Activated CD4-positive, alpha-beta T cell treated with anti-CD3 and anti-CD28 coated beads, Interleukin-2, amount 10 ng/mL, durations not matched to agents 24 days and 14 days (primary cell): ENCODE measurements at regions of chr11 and their contacts with region 1.

Region 1: GRCh38 chr11:86138958-86139357 is 70.1 kb upstream of the PICALM start:
- DNase-seq: peak; percentile 79
- H3K4me3 Mint-ChIP-seq: peak overlapping the region; percentile 72
- H3K27ac Mint-ChIP-seq: peak overlapping the region; percentile 85
- H3K4me1 Mint-ChIP-seq: peaks cover 58% of the 10 kb centered on the region
- H3K27me3 Mint-ChIP-seq: no peaks in the 10 kb centered on the region

Region 2: GRCh38 chr11:86116386-86116726 is 22.6 kb before region 1 on chr11:
- intact Hi-C with region 1: loop called (anchors 1 kb)
- DNase-seq: peak; percentile 70
- H3K4me3 Mint-ChIP-seq: peak overlapping the region; percentile 24
- H3K27ac Mint-ChIP-seq: peak overlapping the region; percentile 69
- H3K4me1 Mint-ChIP-seq: peaks cover 30% of the 10 kb centered on the region
- H3K27me3 Mint-ChIP-seq: peaks cover 2% of the 10 kb centered on the region

Region 3: DNA sequence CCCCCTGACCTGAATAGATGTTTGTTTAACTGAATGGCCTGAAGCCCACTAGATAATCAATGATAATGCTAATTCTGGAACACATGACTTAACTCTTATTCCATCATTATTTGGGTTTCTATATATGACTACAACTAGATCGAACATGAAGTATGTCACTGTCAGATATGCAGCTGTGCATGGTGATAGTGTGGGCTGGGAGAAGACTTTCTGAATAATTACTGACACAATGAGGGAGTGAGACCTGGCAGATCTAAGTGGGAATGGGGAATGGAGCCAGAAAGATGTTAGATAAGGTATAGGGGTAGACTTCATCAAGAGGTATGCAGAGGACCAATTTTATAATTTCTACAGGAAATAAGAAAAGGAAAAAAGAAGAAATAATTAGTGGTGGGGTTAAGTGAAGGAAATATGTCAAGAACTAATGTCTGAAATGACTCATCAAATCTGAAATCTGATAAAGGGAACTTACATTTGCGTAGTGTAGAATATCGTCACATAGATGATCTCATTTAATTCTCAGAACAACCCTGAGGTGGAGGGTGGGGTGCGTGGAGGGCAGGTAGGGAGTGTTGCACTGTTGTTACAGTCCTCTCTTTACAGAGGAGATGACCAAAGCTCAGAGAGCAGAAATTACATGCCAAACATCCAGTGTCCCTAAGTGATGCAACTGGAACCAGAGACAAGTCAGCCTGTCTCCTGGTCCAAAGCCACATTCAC is 37.4 kb after region 1 on chr11:
- intact Hi-C with region 1: loop called (anchors 1 kb)
- DNase-seq: peak; percentile 85
- H3K4me3 Mint-ChIP-seq: peak overlapping the region; percentile 10
- H3K27ac Mint-ChIP-seq: peak overlapping the region; percentile 82
- H3K4me1 Mint-ChIP-seq: peaks cover 27% of the 10 kb centered on the region
- H3K27me3 Mint-ChIP-seq: no peaks in the 10 kb centered on the region

Region 4: DNA sequence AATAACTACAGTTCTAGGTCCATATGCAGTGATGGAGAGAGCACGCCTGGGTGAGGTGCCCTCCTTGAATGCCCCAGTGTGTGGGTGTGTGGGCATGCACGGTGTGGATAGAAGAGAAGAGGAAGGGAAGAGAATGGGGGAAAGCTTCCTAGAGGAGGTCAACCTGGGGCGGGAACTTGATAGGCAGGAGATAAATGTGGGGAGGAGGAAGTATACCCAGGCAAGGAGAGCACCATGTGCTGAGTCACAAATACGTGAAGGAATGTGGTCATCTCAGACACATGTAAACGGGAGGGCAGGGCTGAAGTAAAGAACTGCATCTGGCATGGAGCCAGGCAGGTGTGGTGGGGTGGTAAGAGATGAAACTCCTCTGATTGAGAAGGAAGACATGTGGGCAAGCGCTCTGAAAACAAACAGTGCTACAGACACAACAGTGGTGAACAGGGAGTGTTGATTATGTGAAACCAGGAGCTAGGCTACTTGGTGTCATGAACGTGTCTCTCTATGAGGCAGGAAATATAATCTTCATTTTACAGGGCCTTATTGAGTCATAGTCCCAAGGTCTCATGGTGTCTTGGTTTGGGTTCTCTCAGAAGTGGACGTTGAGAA is 44.1 kb after region 1 on chr11:
- intact Hi-C with region 1: loop called (anchors 2 kb)
- DNase-seq: peak; percentile 83
- H3K4me3 Mint-ChIP-seq: no peak overlapping the region
- H3K27ac Mint-ChIP-seq: no peak overlapping the region
- H3K4me1 Mint-ChIP-seq: peaks cover 17% of the 10 kb centered on the region
- H3K27me3 Mint-ChIP-seq: no peaks in the 10 kb centered on the region

Region 5: GRCh38 chr11:86386746-86387145 is 247.8 kb after region 1 on chr11:
- intact Hi-C with region 1: no loop called
- DNase-seq: no peak
- H3K4me3 Mint-ChIP-seq: no peak overlapping the region
- H3K27ac Mint-ChIP-seq: no peak overlapping the region
- H3K4me1 Mint-ChIP-seq: no peaks in the 10 kb centered on the region
- H3K27me3 Mint-ChIP-seq: no peaks in the 10 kb centered on the region